ENCODE measurements at regions of chr3 and their contacts with region 1.

Region 1: GRCh38 chr3:114329823-114330222 is 36.0 kb downstream of the TIGIT start:
- DNase-seq: no peak
- ATAC-seq: peak; percentile 15
- H3K4me3 Mint-ChIP-seq: no peak overlapping the region
- H3K27ac Mint-ChIP-seq: peak overlapping the region; percentile 66
- H3K4me1 Mint-ChIP-seq: peaks cover 79% of the 10 kb centered on the region
- H3K27me3 Mint-ChIP-seq: no peaks in the 10 kb centered on the region

Region 2: GRCh38 chr3:114052216-114052615 is 277.6 kb before region 1 on chr3:
- CTCF ChIA-PET with region 1: no interaction called
- POLR2A ChIA-PET with region 1: no interaction called
- intact Hi-C with region 1: no loop called
- DNase-seq: no peak
- ATAC-seq: no peak
- H3K4me3 Mint-ChIP-seq: no peak overlapping the region
- H3K27ac Mint-ChIP-seq: no peak overlapping the region
- H3K4me1 Mint-ChIP-seq: peaks cover 12% of the 10 kb centered on the region
- H3K27me3 Mint-ChIP-seq: no peaks in the 10 kb centered on the region

Region 3: DNA sequence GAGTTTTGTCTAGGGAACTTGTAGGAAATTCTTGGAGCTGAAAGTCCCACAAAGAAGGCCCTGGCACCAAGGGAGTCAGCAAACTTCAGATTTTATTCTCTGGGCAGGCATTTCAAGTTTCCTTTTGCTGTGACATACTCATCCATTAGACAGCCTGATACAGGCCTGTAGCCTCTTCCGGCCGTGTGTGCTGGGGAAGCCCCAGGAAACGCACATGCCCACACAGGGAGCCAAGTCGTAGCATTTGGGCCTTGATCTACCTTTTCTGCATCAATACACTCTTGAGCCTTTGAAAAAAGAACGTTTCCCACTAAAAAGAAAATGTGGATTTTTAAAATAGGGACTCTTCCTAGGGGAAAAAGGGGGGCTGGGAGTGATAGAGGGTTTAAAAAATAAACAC is 21.0 kb before region 1 on chr3:
- CTCF ChIA-PET with region 1: interaction called, 13 read pairs
- POLR2A ChIA-PET with region 1: interaction called, 6 read pairs
- intact Hi-C with region 1: loop called (anchors 1 to 2 kb)
- DNase-seq: peak; percentile 69
- ATAC-seq: peak; percentile 75
- H3K4me3 Mint-ChIP-seq: peak overlapping the region; percentile 40
- H3K27ac Mint-ChIP-seq: peak overlapping the region; percentile 95
- H3K4me1 Mint-ChIP-seq: peaks cover 56% of the 10 kb centered on the region
- H3K27me3 Mint-ChIP-seq: no peaks in the 10 kb centered on the region

Region 4: GRCh38 chr3:114319453-114319852 is 10.4 kb before region 1 on chr3:
- CTCF ChIA-PET with region 1: interaction called, 8 read pairs
- POLR2A ChIA-PET with region 1: no interaction called
- intact Hi-C with region 1: loop called in 1 of 2 experiments (anchors 1 kb)
- DNase-seq: no peak
- ATAC-seq: no peak
- H3K4me3 Mint-ChIP-seq: no peak overlapping the region
- H3K27ac Mint-ChIP-seq: no peak overlapping the region
- H3K4me1 Mint-ChIP-seq: peaks cover 64% of the 10 kb centered on the region
- H3K27me3 Mint-ChIP-seq: no peaks in the 10 kb centered on the region

Region 5: DNA sequence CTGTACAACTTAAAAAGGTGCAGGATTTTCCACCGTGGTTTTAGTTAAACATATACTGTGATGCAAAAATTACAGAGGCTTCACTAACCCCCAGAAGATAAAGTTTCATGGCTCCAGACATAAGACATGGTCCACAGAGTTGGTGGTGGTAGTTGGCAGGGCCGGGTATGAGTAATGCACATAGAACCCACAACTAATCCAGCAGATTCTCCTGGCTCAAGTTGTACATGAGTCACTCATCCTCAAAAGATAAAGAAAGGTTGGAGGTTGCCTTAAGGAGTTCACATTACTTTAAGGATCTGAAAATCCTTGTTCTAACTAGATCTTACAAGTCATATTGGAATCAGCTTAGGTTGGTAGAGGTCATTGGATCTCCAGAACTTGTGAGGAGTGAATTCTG is 915.6 kb after region 1 on chr3:
- CTCF ChIA-PET with region 1: no interaction called
- POLR2A ChIA-PET with region 1: no interaction called
- intact Hi-C with region 1: no loop called
- DNase-seq: no peak
- ATAC-seq: no peak
- H3K4me3 Mint-ChIP-seq: no peak overlapping the region
- H3K27ac Mint-ChIP-seq: no peak overlapping the region
- H3K4me1 Mint-ChIP-seq: no peaks in the 10 kb centered on the region
- H3K27me3 Mint-ChIP-seq: no peaks in the 10 kb centered on the region

Measured in activated CD4-positive, alpha-beta T cell treated with anti-CD3 and anti-CD28 coated beads for 36 hours (primary cell).